Endothelial cell of umbilical vein (primary cell): ENCODE measurements at regions of chr4 and their contacts with region 1.

Region 1: GRCh38 chr4:48141048-48141447 is 7.0 kb upstream of the TXK start:
- DNase-seq: peak; percentile 56
- H3K4me3 ChIP-seq: no peak overlapping the region
- H3K27ac ChIP-seq: no peak overlapping the region
- H3K4me1 ChIP-seq: peaks cover 12% of the 10 kb centered on the region
- H3K27me3 ChIP-seq: peaks cover 0 to 6% of the 10 kb centered on the region in 2 experiments
- CTCF ChIP-seq: peak; percentile 22 to 37
- POLR2A ChIP-seq: no peak

Region 2: GRCh38 chr4:48008021-48008596 is 132.9 kb before region 1 on chr4:
- CTCF ChIA-PET with region 1: interaction called, 8 read pairs
- POLR2A ChIA-PET with region 1: no interaction called
- dilution Hi-C with region 1: no loop called
- intact Hi-C with region 1: loop called (anchors 1 kb)
- DNase-seq: no peak
- H3K4me3 ChIP-seq: no peak overlapping the region
- H3K27ac ChIP-seq: no peak overlapping the region
- H3K4me1 ChIP-seq: no peaks in the 10 kb centered on the region
- H3K27me3 ChIP-seq: no peaks in the 10 kb centered on the region
- CTCF ChIP-seq: no peak
- POLR2A ChIP-seq: no peak

Region 3: GRCh38 chr4:48085821-48086607 is 55.0 kb before region 1 on chr4:
- CTCF ChIA-PET with region 1: interaction called, 10 read pairs
- POLR2A ChIA-PET with region 1: no interaction called
- dilution Hi-C with region 1: no loop called
- intact Hi-C with region 1: loop called (anchors 2 kb)
- DNase-seq: no peak
- H3K4me3 ChIP-seq: no peak overlapping the region
- H3K27ac ChIP-seq: no peak overlapping the region
- H3K4me1 ChIP-seq: peaks cover 7% of the 10 kb centered on the region
- H3K27me3 ChIP-seq: no peaks in the 10 kb centered on the region
- CTCF ChIP-seq: no peak
- POLR2A ChIP-seq: no peak

Region 4: DNA sequence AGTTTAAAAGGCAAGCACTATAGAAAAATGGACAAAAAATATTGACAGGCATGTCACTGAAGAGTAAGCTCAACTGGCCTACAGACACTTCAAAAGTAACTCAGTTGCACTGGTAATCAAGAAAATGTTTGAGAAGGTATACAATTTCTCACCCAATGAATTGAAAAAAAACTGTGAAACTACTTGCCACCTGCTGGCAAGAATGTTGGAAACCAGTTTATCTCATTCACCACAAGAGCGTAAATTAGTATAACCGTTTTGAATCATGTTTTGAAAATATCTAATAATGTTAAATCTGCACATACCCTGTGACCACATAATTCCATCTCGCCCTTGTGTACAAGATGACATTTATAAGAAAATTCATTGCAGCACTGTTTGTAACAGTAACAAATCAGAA is 38.7 kb before region 1 on chr4:
- CTCF ChIA-PET with region 1: no interaction called
- POLR2A ChIA-PET with region 1: no interaction called
- dilution Hi-C with region 1: no loop called
- intact Hi-C with region 1: no loop called
- DNase-seq: no peak
- H3K4me3 ChIP-seq: no peak overlapping the region
- H3K27ac ChIP-seq: no peak overlapping the region
- H3K4me1 ChIP-seq: no peaks in the 10 kb centered on the region
- H3K27me3 ChIP-seq: no peaks in the 10 kb centered on the region
- CTCF ChIP-seq: no peak
- POLR2A ChIP-seq: no peak

Region 5: GRCh38 chr4:48127682-48128394 is 13.2 kb before region 1 on chr4:
- CTCF ChIA-PET with region 1: interaction called, 58 read pairs
- POLR2A ChIA-PET with region 1: no interaction called
- dilution Hi-C with region 1: no loop called
- intact Hi-C with region 1: loop called (anchors 1 kb)
- DNase-seq: peak; percentile 95
- H3K4me3 ChIP-seq: peak overlapping the region in 1 of 3 experiments; percentile 2
- H3K27ac ChIP-seq: peak overlapping the region; percentile 88
- H3K4me1 ChIP-seq: peaks cover 19% of the 10 kb centered on the region
- H3K27me3 ChIP-seq: no peaks in the 10 kb centered on the region
- CTCF ChIP-seq: peak; percentile 55 to 58
- POLR2A ChIP-seq: peak; percentile 33